ENCODE measurements at regions of chr10 and their contacts with region 1.

Region 1: DNA sequence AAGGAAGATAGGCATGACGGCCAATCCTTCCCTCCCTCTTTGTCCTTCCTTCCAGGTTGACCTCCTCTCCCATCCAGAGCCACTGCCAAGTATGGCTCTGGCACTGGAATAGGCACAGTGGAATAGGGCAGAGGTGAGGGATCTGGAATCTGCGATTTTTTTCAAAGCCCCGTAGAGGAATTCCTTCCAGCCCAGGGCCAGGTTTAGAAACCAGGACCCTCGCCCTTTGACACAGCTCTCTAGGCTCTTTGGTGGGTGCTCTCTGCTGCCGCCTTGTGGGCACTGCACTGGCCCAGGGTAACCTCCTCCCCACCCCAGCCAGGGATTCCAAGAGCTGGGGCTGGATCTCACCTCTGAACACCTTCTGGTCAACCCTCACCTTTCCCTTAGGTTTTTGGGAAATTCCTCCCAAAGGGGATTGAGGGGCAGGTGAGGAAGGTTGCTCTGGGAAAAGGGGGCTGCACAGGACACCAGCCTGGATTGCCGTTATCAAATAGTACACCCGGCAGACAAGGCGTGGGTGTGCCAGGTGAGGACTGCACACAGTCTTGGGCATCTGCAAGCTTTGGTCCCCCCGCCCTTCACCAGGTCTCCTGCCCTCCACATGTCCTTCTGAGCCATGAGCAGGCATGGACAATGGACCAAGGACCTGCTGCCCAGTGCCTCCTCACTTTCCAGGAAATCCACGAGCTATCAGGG is 22.8 kb downstream of the C10orf105 start:
- DNase-seq: peak; percentile 41 to 95
- H3K4me3 ChIP-seq: no peak overlapping the region
- H3K27ac ChIP-seq: no peak overlapping the region
- H3K4me1 ChIP-seq: no peaks in the 10 kb centered on the region; a peak in 1 of 7 replicates
- H3K27me3 ChIP-seq: no peaks in the 10 kb centered on the region
- CTCF ChIP-seq: peak; percentile 94 to 95 (median 95)
- EP300 ChIP-seq: no peak
- POLR2A ChIP-seq: no peak
- RAD21 ChIP-seq: peak; percentile 81 to 87

Region 2: DNA sequence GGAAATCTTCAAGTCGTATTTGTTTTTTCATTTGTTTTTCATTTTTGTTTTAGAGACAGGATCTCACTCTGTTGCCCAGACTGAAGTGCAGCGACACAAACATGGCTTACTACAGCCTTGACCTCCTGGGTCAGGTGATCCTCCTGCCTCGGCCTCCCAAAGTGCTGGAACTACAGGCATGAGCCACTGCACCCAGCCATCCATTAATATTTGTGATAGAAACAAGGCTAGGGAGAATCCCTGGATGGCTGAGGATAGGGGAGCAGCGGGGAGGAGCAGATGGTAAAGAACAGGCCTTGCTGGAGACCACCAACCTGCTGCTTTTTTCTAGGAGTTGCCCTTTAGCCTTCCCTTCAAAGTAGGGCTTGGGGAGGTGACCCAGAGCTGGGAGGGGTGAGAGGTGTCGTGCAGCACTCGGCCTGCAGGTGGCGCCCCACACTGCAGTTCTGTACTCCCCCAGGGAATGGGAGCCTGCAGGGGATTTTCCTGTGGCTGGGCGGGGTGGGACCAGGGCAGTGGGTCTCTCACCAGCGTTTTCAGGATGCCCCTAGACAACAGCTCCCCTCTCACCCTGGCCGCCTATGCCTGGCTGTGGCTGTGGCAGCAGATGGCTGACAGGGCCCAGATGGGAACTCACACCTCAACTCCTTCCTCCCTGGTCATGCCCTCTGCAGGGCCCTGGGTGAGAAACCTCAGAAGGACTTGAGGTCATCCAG is 312.6 kb before region 1 on chr10:
- CTCF ChIA-PET with region 1: interaction called, 19 read pairs
- POLR2A ChIA-PET with region 1: no interaction called
- DNase-seq: peak; percentile 58 to 99
- H3K4me3 ChIP-seq: no peak overlapping the region
- H3K27ac ChIP-seq: no peak overlapping the region
- H3K4me1 ChIP-seq: no peaks in the 10 kb centered on the region
- H3K27me3 ChIP-seq: no peaks in the 10 kb centered on the region
- CTCF ChIP-seq: peak; percentile 93 to 96 (median 95)
- EP300 ChIP-seq: no peak
- POLR2A ChIP-seq: no peak
- RAD21 ChIP-seq: peak; percentile 91 to 92

Region 3: GRCh38 chr10:71623098-71623985 is 73.4 kb before region 1 on chr10:
- CTCF ChIA-PET with region 1: interaction called, 17 read pairs
- POLR2A ChIA-PET with region 1: interaction called, 3 read pairs
- DNase-seq: no peak
- H3K4me3 ChIP-seq: peak overlapping the region in 1 of 4 experiments; percentile 33; a peak in 1 of 8 replicates
- H3K27ac ChIP-seq: no peak overlapping the region
- H3K4me1 ChIP-seq: peaks cover 25 to 52% (median 35%) of the 10 kb centered on the region in 4 experiments
- H3K27me3 ChIP-seq: no peaks in the 10 kb centered on the region
- CTCF ChIP-seq: peak in 2 of 3 experiments; percentile 6 to 46; a peak in 2 of 4 replicates
- EP300 ChIP-seq: no peak
- POLR2A ChIP-seq: no peak
- RAD21 ChIP-seq: peak; percentile 28 to 43; a peak in 3 of 4 replicates

Region 4: DNA sequence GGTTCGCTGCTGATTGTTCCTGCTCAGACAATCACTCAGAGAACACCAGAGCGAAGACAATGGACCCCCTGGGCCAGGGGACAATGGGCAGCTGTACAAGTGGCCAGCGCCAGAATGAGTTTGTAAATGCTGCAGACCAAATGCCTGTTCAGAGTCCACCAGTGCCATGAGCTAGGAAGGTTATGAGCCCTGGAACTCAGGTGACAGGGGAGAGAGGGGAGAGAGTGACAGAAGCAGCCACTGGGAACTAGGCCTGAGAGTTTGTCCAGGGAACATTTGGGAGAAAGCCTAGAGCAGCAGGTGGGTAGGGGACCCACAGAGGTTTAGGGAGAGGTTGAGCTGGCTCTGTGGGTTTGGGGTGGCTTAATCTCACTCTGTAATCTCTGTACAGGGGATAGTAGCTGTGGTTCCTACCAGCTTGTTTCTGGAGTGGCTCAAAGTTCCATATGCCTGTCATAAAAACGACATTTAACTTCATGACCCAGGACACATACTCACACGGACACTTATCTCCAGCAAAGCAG is 37.6 kb before region 1 on chr10:
- CTCF ChIA-PET with region 1: interaction called, 46 read pairs
- POLR2A ChIA-PET with region 1: interaction called, 5 read pairs
- DNase-seq: peak in 1 of 2 experiments; percentile 19
- H3K4me3 ChIP-seq: no peak overlapping the region; a peak in 3 of 8 replicates
- H3K27ac ChIP-seq: no peak overlapping the region
- H3K4me1 ChIP-seq: peaks cover 22 to 36% (median 31%) of the 10 kb centered on the region in 4 experiments
- H3K27me3 ChIP-seq: peaks cover 0 to 19% (median 13%) of the 10 kb centered on the region in 4 experiments; a peak in 4 of 7 replicates
- CTCF ChIP-seq: no peak
- EP300 ChIP-seq: no peak
- POLR2A ChIP-seq: no peak
- RAD21 ChIP-seq: no peak

Region 5: DNA sequence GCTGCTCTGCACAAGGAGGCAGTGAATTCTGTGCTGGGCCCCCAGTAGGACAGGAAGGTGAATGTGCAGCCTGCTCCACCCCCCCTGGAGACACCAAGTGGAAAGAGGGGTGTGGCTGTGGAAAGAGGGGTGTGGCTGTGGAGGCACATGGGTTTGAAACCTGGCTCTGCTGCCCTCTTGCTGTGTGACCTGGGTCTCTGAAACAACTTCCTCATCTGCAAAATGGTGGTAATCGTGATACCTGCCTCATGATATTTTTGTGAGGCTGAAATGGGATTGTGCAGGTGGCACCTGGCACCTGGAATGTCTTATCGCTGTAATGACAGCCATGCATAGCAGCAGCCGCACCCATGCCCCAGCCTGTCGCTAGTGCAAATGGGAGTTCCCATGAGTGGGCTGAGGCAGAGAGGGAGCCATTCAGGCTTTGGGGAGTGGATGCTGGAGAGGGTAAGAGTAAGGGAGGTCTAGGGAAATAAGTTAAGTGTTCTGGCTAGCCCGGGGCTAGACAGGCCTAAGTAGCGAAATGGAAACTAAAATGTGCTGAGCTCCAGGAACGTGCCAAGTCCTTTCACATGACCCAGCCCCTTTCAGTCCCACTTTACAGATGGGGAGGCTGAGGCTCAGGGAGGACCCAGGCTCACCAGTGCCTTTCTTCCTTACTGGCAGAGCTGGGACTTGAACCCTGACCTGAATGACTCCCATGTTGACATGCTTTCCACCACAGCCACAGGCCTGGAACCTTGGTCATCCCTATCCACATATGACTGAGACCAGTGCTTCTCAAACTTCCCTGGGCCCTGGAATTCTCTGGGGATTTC is 12.2 kb before region 1 on chr10:
- CTCF ChIA-PET with region 1: interaction called, 63 read pairs
- POLR2A ChIA-PET with region 1: interaction called, 3 read pairs
- DNase-seq: no peak
- H3K4me3 ChIP-seq: no peak overlapping the region
- H3K27ac ChIP-seq: no peak overlapping the region
- H3K4me1 ChIP-seq: peaks cover 7 to 25% (median 9%) of the 10 kb centered on the region in 4 experiments
- H3K27me3 ChIP-seq: no peaks in the 10 kb centered on the region; a peak in 1 of 7 replicates
- CTCF ChIP-seq: peak in 1 of 3 experiments; percentile 11; a peak in 1 of 4 replicates
- EP300 ChIP-seq: no peak
- POLR2A ChIP-seq: no peak
- RAD21 ChIP-seq: peak in 1 of 2 experiments; percentile 20; a peak in 3 of 4 replicates